ENCODE measurements at regions of chr7 and their contacts with region 1.

Region 1: DNA sequence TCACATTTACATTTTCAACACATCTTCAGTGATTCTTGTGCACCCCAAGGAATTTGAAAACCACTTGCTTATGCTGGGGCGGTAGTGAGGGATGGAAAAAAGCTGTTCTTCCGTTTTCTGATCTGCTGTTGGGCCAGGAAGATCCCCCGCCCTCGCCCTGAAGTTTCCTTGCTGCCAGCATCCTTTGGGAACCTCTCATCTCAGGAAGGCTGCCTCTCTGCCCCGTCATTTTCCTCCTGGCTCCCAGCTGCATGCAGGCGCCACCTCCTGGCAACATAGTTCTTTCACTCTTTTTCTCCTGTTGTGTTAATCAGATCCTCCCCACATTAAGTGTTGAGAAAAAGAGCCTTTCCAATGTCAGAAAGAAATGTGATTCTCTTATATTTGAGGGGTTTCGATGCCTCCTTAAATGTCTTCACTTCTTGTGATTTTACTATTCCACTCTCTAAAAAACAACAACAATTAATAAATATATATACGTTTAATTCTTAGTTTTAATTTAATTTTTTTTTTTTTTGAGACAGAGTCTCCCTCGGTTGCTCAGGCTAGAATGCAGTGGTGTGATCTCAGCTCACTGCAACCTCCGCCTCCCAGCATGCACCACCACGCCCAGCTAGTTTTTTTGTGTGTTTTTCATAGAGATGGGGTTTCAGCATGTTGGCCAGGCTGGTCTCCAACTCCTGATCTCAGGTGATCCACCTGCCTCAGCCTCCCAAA is 122.9 kb downstream of the RALA start:
- DNase-seq: peak; percentile 83 to 85
- H3K4me3 ChIP-seq: no peak overlapping the region
- H3K27ac ChIP-seq: no peak overlapping the region
- H3K4me1 ChIP-seq: peaks cover 0 to 3% of the 10 kb centered on the region in 2 donors
- H3K27me3 ChIP-seq: no peaks in the 10 kb centered on the region
- CTCF ChIP-seq: peak; percentile 58 to 84 (median 78)
- POLR2A ChIP-seq: no peak

Region 2: DNA sequence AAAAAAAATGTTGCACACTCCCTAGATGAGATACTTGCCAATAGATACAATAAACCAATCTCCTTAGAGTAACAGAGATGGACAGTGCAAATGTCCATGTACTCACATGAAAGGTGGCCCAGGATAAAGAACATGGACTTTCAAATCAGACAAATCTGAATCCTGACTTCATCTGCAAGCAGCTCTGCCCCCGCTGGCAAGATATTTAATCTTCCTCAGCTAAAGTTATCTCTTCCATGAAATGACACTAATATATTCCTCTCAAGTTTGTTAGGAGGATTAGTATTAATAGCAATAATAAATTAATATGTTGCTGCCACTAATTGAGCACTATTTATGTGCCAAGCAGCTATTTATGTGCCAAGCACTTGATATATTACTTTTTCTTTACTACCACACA is 328.6 kb before region 1 on chr7:
- intact Hi-C with region 1: no loop called
- DNase-seq: no peak
- H3K4me3 ChIP-seq: no peak overlapping the region
- H3K27ac ChIP-seq: no peak overlapping the region
- H3K4me1 ChIP-seq: no peaks in the 10 kb centered on the region
- H3K27me3 ChIP-seq: no peaks in the 10 kb centered on the region
- CTCF ChIP-seq: no peak
- POLR2A ChIP-seq: no peak

Region 3: GRCh38 chr7:39580149-39580874 is 165.9 kb before region 1 on chr7:
- intact Hi-C with region 1: loop called (anchors 5 kb)
- DNase-seq: peak; percentile 78 to 81
- H3K4me3 ChIP-seq: no peak overlapping the region
- H3K27ac ChIP-seq: no peak overlapping the region
- H3K4me1 ChIP-seq: no peaks in the 10 kb centered on the region
- H3K27me3 ChIP-seq: no peaks in the 10 kb centered on the region
- CTCF ChIP-seq: peak; percentile 50 to 89 (median 84)
- POLR2A ChIP-seq: no peak

Region 4: GRCh38 chr7:39623018-39623731 is 123.1 kb before region 1 on chr7 and contains the start of gene RALA:
- intact Hi-C with region 1: loop called (anchors 10 kb)
- DNase-seq: peak; percentile 93
- H3K4me3 ChIP-seq: peak within 1 kb of the TSS; percentile 72 to 82 (median 79)
- H3K27ac ChIP-seq: peak within 1 kb of the TSS; percentile 81 to 89 (median 83)
- H3K4me1 ChIP-seq: peaks cover 19 to 23% of the 10 kb centered on the region in 2 donors
- H3K27me3 ChIP-seq: no peaks in the 10 kb centered on the region
- CTCF ChIP-seq: peak in 1 of 6 experiments; percentile 3
- POLR2A ChIP-seq: peak; percentile 20 to 91
- total RNA-seq, gene RALA: 18.3 to 29.7 (median 20.0) TPM

Region 5: GRCh38 chr7:39667341-39667923 is 78.8 kb before region 1 on chr7:
- intact Hi-C with region 1: no loop called
- DNase-seq: no peak
- H3K4me3 ChIP-seq: no peak overlapping the region
- H3K27ac ChIP-seq: no peak overlapping the region
- H3K4me1 ChIP-seq: no peaks in the 10 kb centered on the region
- H3K27me3 ChIP-seq: no peaks in the 10 kb centered on the region
- CTCF ChIP-seq: no peak
- POLR2A ChIP-seq: no peak